ENCODE measurements at regions of chr14 and their contacts with region 1.

Region 1: GRCh38 chr14:69879175-69880043 is at the start of gene SMOC1:
- DNase-seq: peak; percentile 32
- H3K4me3 ChIP-seq: peak within 1 kb of the TSS; percentile 7
- H3K27ac ChIP-seq: no peak within 1 kb of the TSS
- H3K4me1 ChIP-seq: no peaks in the 10 kb centered on the region
- H3K27me3 ChIP-seq: peaks cover 21% of the 10 kb centered on the region
- CTCF ChIP-seq: no peak
- total RNA-seq, gene SMOC1: 0.50 to 0.67 TPM

Region 2: DNA sequence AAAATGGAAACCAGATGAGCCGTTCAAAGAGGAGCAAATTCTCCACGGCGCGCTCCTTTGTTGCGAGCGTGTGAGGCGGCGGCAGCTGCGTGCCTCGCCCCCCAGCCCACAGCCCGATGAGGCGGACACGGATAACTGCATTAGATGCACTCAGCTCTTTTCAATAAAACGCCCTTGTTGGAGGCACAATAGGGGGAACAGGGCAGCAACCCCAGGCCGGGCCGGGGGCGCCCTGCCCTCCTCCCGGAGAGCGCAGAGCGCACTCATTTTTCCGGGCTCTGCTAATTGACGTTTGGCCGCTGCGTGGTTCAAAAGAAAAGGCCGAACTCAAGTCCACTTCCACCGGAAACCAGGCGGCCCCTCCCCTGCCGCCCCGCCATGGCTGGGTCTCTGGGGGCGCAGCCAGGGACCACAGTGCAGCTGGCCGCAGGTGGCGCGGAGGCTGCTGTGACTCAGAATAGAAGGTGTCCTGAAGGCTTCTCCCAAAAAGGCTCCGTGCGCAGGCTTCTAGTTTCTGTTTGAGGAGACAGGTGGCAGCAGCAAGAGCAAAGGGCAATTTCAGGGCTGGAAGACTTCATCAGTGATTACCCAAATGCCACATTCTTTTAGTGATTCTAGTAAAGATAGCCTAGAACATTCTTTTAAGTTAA is 29.2 kb before region 1 on chr14:
- intact Hi-C with region 1: no loop called
- DNase-seq: no peak
- H3K4me3 ChIP-seq: no peak overlapping the region
- H3K27ac ChIP-seq: no peak overlapping the region
- H3K4me1 ChIP-seq: no peaks in the 10 kb centered on the region
- H3K27me3 ChIP-seq: no peaks in the 10 kb centered on the region
- CTCF ChIP-seq: no peak

Region 3: DNA sequence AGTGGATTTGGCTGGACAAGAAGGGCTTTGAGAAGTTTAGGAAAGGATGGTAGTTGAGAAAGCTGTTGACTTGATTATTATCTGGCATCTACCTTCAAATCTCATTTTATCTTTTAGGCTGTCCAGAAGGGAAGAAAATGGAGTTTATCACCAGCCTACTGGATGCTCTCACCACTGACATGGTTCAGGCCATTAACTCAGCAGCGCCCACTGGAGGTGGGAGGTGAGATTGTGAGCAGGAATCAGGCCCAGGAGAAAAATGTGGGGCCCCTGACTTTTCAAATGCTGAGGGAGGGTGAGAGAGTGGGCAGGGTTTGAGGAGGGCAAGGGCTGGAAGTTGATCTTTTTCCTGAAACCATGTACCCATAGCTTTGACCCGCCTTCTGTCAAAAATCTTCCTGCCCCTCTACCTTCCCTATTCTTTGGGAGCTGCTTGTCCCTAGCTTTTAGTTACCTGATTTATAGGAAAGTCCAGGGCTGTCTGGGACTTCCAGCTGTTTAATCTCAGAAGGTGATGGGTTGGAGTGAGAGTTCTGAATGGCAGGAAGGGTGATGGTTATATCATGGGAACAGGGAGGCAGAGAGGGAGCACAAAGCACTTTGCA is 134.0 kb after region 1 on chr14:
- intact Hi-C with region 1: loop called (anchors 5 kb)
- DNase-seq: peak; percentile 56
- H3K4me3 ChIP-seq: no peak overlapping the region
- H3K27ac ChIP-seq: no peak overlapping the region
- H3K4me1 ChIP-seq: peaks cover 1% of the 10 kb centered on the region
- H3K27me3 ChIP-seq: no peaks in the 10 kb centered on the region
- CTCF ChIP-seq: peak; percentile 68

Region 4: GRCh38 chr14:70317969-70318634 is 438.7 kb after region 1 on chr14:
- intact Hi-C with region 1: loop called (anchors 5 kb)
- DNase-seq: peak; percentile 44
- H3K4me3 ChIP-seq: no peak overlapping the region
- H3K27ac ChIP-seq: no peak overlapping the region
- H3K4me1 ChIP-seq: no peaks in the 10 kb centered on the region
- H3K27me3 ChIP-seq: no peaks in the 10 kb centered on the region
- CTCF ChIP-seq: peak; percentile 37